Activated B cell treated with CpG ODN at 0.5 μM for 24 hours (primary cell): ENCODE measurements at regions of chr7 and their contacts with region 1.

Region 1: DNA sequence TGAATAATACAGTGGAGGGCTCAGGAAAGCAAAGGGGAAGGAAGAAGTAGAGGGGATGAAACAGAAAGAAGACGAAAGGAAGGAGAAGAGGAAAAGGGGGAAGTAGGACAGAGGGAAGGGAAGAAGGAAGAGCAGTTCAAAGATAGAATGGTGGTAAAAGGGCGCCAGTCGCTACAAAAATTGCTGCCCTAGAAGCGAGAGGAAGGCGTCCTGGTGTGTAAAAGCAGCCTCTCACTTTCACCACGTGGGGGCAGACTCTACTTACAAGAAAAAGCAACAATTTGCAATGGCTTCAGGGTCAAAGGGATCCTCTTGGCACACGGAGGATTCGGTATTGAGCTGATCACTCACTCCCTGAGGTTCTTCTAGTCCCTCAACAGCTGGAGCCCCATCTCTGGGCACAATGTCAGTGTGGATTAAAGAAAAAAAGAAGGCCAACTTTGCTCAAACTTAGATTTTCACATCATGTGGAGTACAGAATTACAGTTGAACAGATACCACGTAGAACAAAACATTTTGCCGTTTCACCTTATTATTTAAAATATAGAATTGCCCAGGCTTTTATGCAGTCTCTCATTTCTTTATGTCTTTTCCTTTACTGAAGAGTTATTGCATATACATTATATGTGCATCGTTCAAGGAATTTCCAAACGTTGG is 31.4 kb upstream of the NPVF start:
- DNase-seq: no peak
- ATAC-seq: peak; percentile 64
- H3K4me3 Mint-ChIP-seq: no peak overlapping the region
- H3K27ac Mint-ChIP-seq: no peak overlapping the region
- H3K4me1 Mint-ChIP-seq: peaks cover 9% of the 10 kb centered on the region
- H3K27me3 Mint-ChIP-seq: peaks cover 37% of the 10 kb centered on the region
- CTCF ChIP-seq: peak; percentile 62

Region 2: DNA sequence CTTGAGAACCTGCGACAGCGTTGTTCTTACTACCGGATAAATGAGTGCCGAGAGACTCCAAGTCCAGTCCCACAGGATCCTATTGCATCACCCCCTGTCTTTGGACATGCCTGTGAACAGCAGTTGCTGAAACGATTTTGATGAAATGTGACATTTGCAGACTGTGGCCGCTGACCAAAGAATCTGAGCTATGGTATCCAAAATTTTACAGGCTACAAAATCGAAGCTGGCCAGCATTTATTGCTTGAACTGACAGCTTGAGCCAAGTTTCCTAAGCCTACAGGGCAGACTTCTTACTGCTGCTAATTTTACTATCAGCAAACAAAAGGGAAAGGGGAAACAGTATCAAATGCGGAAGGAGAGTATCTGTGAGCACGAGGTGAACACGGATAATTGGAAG is 19.4 kb before region 1 on chr7:
- CTCF ChIA-PET with region 1: no interaction called
- POLR2A ChIA-PET with region 1: no interaction called
- intact Hi-C with region 1: no loop called
- DNase-seq: no peak
- ATAC-seq: no peak
- H3K4me3 Mint-ChIP-seq: no peak overlapping the region
- H3K27ac Mint-ChIP-seq: no peak overlapping the region
- H3K4me1 Mint-ChIP-seq: no peaks in the 10 kb centered on the region
- H3K27me3 Mint-ChIP-seq: peaks cover 19% of the 10 kb centered on the region
- CTCF ChIP-seq: no peak

Region 3: DNA sequence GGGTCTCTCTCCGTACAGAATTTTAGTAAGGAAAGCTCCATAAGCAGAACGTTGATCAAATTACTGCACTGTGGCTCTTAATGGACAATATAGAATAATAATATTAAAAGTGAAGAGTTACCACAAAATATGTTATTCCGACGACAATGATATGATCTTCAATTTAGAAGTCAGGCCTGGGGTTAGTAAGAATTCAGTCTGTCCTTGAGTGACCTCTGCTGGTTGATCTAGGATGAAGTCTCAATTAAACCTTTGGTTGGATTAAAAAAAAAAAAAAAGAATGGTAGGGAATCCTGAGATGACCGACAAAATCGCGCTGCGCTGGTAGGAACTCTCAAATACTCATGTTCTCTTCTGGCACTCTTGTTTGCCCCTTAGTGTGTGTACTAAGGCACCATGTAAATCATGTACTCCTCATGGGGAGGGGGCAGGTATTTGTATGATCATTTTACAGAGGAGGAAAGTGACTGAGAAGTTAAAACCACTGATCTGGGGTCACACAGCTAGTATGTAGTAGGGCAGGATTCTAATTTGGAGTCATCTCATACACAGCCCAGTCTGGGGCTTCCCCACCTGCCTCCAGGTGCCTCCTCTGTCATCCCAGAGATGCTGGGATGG is 129.9 kb after region 1 on chr7:
- CTCF ChIA-PET with region 1: interaction called, 5 read pairs
- POLR2A ChIA-PET with region 1: no interaction called
- intact Hi-C with region 1: loop called (anchors 1 kb)
- DNase-seq: no peak
- ATAC-seq: no peak
- H3K4me3 Mint-ChIP-seq: no peak overlapping the region
- H3K27ac Mint-ChIP-seq: no peak overlapping the region
- H3K4me1 Mint-ChIP-seq: no peaks in the 10 kb centered on the region
- H3K27me3 Mint-ChIP-seq: peaks cover 21% of the 10 kb centered on the region
- CTCF ChIP-seq: no peak

Region 4: GRCh38 chr7:25851332-25852210 is 591.9 kb after region 1 on chr7:
- CTCF ChIA-PET with region 1: interaction called, 4 read pairs
- POLR2A ChIA-PET with region 1: no interaction called
- intact Hi-C with region 1: loop called (anchors 1 kb)
- DNase-seq: no peak
- ATAC-seq: peak; percentile 64
- H3K4me3 Mint-ChIP-seq: peak overlapping the region; percentile 70
- H3K27ac Mint-ChIP-seq: peak overlapping the region; percentile 76
- H3K4me1 Mint-ChIP-seq: peaks cover 12% of the 10 kb centered on the region
- H3K27me3 Mint-ChIP-seq: peaks cover 50% of the 10 kb centered on the region
- CTCF ChIP-seq: no peak